Naive thymus-derived CD4-positive, alpha-beta T cell (primary cell): ENCODE measurements at regions of chr2 and their contacts with region 1.

Region 1: DNA sequence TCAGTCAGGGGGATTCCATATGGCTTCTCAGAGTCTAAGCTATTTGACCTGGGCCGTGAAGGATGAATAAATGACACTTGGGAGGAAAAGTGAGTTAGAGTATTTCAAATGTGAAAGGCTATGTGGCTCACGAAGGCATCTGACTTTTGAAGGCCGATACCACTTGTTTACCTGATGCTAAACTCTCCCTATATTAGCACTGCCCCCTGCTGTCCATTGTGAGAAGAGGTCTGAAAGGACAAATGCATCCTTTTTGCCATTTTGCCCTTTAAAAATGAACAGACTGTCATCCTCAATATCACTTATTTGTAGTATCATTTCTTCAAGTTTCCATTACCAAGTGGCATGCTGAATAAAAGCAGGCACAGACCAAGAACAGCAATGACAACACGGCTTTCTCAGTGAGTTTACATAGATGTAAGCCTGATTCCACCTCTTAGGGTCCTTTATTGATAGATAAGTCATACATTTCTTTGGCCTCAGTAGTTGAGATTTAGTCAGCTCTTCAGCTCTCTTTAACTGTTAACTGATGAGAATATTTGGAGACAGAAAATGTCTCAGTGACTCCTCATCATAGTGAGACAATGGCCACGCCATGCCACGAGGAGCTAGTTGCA is 40.1 kb downstream of the DOCK10 start:
- DNase-seq: peak in 8 of 9 donors; percentile 48 to 75 (median 70)
- ATAC-seq: peak; percentile 93
- H3K4me3 ChIP-seq: no peak overlapping the region
- H3K4me3 Mint-ChIP-seq: peak overlapping the region in 9 of 10 donors; percentile 9 to 70 (median 40)
- H3K27ac ChIP-seq: peak overlapping the region; percentile 23
- H3K27ac Mint-ChIP-seq: peak overlapping the region; percentile 64 to 90 (median 87)
- H3K4me1 ChIP-seq: peaks cover 27 to 43% of the 10 kb centered on the region in 2 donors
- H3K4me1 Mint-ChIP-seq: peaks cover 51 to 97% (median 90%) of the 10 kb centered on the region in 7 donors
- H3K27me3 ChIP-seq: no peaks in the 10 kb centered on the region
- H3K27me3 Mint-ChIP-seq: no peaks in the 10 kb centered on the region

Region 2: DNA sequence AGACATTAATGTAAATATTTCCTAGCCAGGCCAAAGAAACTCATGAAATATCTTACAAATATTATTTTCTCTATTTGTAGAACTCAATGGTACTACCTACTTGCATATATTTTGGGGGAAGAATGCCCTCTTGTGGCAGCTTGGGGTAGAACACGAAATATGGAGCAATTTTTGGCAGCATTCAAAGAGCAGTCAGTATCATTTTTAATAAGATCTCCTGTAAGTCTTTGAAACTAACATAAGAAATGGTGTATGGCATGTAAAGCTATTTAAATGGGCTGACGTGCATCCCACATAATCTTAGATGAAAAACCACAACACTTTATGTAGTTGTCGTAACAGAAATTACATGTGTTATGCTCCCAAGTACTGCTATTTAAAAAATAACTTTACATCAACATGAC is 223.7 kb before region 1 on chr2:
- CTCF ChIA-PET with region 1: no interaction called
- POLR2A ChIA-PET with region 1: no interaction called
- intact Hi-C with region 1: loop called in 1 of 2 experiments (anchors 2 kb)
- DNase-seq: peak; percentile 18 to 68 (median 58)
- ATAC-seq: peak; percentile 80
- H3K4me3 ChIP-seq: no peak overlapping the region
- H3K4me3 Mint-ChIP-seq: no peak overlapping the region
- H3K27ac ChIP-seq: no peak overlapping the region
- H3K27ac Mint-ChIP-seq: peak overlapping the region in 5 of 9 donors; percentile 10 to 54 (median 43)
- H3K4me1 ChIP-seq: no peaks in the 10 kb centered on the region
- H3K4me1 Mint-ChIP-seq: peaks cover 0 to 22% (median 11%) of the 10 kb centered on the region in 7 donors
- H3K27me3 ChIP-seq: no peaks in the 10 kb centered on the region
- H3K27me3 Mint-ChIP-seq: no peaks in the 10 kb centered on the region

Region 3: GRCh38 chr2:224927646-224928173 is 74.4 kb before region 1 on chr2:
- CTCF ChIA-PET with region 1: interaction called, 27 read pairs
- POLR2A ChIA-PET with region 1: interaction called, 12 read pairs
- intact Hi-C with region 1: loop called (anchors 1 kb)
- DNase-seq: peak; percentile 18 to 91 (median 85)
- ATAC-seq: peak; percentile 89
- H3K4me3 ChIP-seq: no peak overlapping the region
- H3K4me3 Mint-ChIP-seq: peak overlapping the region; percentile 48 to 85 (median 74)
- H3K27ac ChIP-seq: peak overlapping the region; percentile 86
- H3K27ac Mint-ChIP-seq: peak overlapping the region; percentile 87 to 99 (median 96)
- H3K4me1 ChIP-seq: peaks cover 81 to 95% of the 10 kb centered on the region in 2 donors
- H3K4me1 Mint-ChIP-seq: peaks cover 85 to 99% (median 98%) of the 10 kb centered on the region in 7 donors
- H3K27me3 ChIP-seq: no peaks in the 10 kb centered on the region
- H3K27me3 Mint-ChIP-seq: no peaks in the 10 kb centered on the region

Region 4: DNA sequence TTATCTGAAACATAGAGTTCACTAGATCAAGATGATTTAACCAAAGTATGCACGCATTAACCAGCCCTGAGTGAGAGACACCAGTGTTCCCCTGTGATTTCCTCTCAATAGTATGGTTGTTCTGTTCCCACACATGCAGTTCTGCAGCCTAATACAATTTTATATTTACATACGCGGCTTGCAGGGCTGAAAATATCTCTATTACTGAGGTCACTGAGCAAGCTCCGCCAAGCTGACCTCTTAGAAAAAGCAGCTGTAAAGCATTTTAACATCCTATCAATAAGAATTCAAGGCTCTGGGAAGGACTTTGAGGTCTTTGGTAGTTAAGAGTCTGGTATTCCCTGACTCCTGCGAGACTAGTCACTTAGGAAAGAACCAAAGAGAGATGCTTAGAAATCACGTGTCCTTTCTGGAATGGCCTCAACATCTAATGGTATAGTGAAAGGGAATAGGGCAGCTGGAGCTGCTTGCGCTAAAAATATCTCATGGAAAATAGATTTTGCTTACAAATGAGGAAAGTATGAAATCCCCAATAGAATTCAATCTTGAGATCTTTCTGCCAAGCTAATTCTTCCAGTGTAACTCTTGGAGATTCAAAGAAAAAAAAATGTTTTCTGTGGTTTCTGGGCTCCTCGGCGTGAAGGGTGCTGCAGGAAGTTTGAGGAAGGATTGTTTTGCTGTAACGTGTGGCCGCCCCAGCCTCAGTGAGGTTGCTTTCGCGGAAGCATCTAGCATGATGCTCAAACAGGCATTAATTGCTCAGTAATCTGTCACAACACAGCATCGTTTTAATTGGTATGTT is 19.0 kb before region 1 on chr2:
- CTCF ChIA-PET with region 1: interaction called, 58 read pairs
- POLR2A ChIA-PET with region 1: interaction called, 3 read pairs
- intact Hi-C with region 1: loop called (anchors 1 to 2 kb)
- DNase-seq: peak in 7 of 9 donors; percentile 44 to 66 (median 52)
- ATAC-seq: peak; percentile 74
- H3K4me3 ChIP-seq: no peak overlapping the region
- H3K4me3 Mint-ChIP-seq: peak overlapping the region; percentile 63 to 85 (median 77)
- H3K27ac ChIP-seq: peak overlapping the region; percentile 50
- H3K27ac Mint-ChIP-seq: peak overlapping the region; percentile 85 to 97 (median 92)
- H3K4me1 ChIP-seq: peaks cover 42 to 58% of the 10 kb centered on the region in 2 donors
- H3K4me1 Mint-ChIP-seq: peaks cover 55 to 91% (median 89%) of the 10 kb centered on the region in 7 donors
- H3K27me3 ChIP-seq: no peaks in the 10 kb centered on the region
- H3K27me3 Mint-ChIP-seq: no peaks in the 10 kb centered on the region

Region 5: DNA sequence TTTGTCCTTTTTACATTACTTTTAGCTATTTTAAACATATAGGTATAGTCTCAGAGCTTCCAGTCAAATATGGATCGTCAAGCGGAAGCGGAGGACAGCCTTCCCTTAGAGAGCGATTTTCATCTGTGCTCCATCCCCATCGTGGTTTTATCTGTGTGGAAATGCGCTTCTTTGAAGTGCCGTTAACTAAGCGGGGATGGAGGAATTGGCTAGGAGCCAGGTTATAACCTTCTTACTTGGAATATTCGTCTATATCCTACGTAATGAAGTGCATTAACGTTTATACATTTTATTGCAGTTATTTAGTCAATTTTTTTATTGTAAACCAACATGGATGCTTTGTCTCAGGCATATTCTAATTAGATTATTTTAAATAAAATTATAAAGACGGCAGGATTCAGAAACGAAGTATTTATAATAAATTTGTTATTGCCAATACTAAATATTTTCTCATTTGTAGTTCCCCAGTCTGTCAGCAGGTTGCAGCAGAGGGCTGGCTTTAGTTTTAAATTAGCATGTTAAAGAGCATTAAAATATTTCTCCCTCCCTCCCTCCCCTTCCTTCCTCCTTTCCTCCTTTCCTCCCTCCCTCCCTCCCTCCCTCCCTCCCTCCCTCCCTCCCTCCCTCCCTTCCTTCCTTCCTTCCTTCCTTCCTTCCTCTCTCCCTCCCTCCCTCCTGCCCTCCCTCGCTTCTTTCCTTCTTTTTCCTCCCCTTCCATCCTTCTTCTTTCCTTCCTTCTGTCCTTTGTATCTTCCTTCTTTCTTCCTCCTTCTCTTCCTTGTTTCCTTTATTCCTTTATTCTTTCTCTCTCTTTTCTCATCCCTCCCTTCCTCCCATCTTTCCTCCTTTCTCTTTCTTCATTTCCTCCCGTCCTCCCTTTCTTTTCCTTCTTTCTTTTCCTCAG is 120.7 kb after region 1 on chr2:
- CTCF ChIA-PET with region 1: interaction called, 7 read pairs
- POLR2A ChIA-PET with region 1: no interaction called
- intact Hi-C with region 1: loop called in 1 of 2 experiments (anchors 2 kb)
- DNase-seq: peak in 4 of 9 donors; percentile 15 to 28 (median 22)
- ATAC-seq: no peak
- H3K4me3 ChIP-seq: no peak overlapping the region
- H3K4me3 Mint-ChIP-seq: peak overlapping the region in 1 of 10 donors; percentile 48
- H3K27ac ChIP-seq: no peak overlapping the region
- H3K27ac Mint-ChIP-seq: peak overlapping the region in 4 of 9 donors; percentile 12 to 83 (median 44)
- H3K4me1 ChIP-seq: no peaks in the 10 kb centered on the region
- H3K4me1 Mint-ChIP-seq: peaks cover 0 to 13% (median 5%) of the 10 kb centered on the region in 7 donors
- H3K27me3 ChIP-seq: no peaks in the 10 kb centered on the region
- H3K27me3 Mint-ChIP-seq: peaks cover 0 to 14% (median 7%) of the 10 kb centered on the region in 5 donors

Region 6: GRCh38 chr2:225590932-225591331 is 588.8 kb after region 1 on chr2:
- CTCF ChIA-PET with region 1: no interaction called
- POLR2A ChIA-PET with region 1: no interaction called
- intact Hi-C with region 1: no loop called
- DNase-seq: no peak
- ATAC-seq: no peak
- H3K4me3 ChIP-seq: no peak overlapping the region
- H3K4me3 Mint-ChIP-seq: no peak overlapping the region
- H3K27ac ChIP-seq: no peak overlapping the region
- H3K27ac Mint-ChIP-seq: no peak overlapping the region
- H3K4me1 ChIP-seq: no peaks in the 10 kb centered on the region
- H3K4me1 Mint-ChIP-seq: no peaks in the 10 kb centered on the region
- H3K27me3 ChIP-seq: no peaks in the 10 kb centered on the region
- H3K27me3 Mint-ChIP-seq: peaks cover 0 to 10% (median 4%) of the 10 kb centered on the region in 5 donors

Region 7: DNA sequence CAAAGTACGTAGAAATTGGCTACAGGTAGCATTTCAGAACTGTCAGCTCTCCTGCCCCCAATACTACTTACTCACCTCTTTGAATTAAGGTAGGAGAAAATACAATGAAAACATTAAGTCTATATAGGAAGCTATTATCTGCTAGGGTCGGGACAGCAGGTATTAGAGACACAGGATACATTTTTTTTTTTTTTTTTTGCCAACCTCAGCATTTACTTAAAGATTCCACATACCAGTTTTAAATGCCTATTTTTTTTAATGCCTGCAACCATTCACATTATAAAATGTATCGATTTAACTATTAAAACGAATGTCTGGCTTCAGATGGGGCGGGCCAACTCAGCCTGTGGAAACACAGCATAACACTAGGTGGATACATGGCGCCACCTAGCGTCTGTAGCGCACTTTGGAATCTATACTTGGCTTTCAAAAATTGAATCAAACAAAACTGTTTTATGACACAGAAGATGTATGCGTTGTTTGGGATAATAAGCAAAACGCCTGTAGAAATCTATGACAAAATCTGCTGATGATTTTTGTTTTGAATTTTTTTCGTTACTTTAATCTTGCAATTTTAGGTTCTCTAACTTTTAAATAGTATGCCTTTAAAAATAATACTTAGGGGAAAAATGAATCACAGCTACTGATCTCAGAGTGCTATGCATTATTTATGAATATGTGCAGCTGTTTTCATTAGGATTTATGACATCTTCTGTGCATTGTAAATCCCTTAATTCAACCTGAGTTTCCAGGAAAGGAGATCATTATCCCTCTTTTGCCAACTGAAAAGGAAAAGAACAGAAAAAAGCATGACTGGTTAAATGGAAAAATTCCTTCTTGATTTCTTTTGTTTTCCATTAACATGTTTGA is 658.4 kb after region 1 on chr2:
- CTCF ChIA-PET with region 1: interaction called, 6 read pairs
- POLR2A ChIA-PET with region 1: no interaction called
- intact Hi-C with region 1: loop called (anchors 1 to 10 kb)
- DNase-seq: peak; percentile 37 to 71 (median 60)
- ATAC-seq: peak; percentile 83
- H3K4me3 ChIP-seq: no peak overlapping the region
- H3K4me3 Mint-ChIP-seq: no peak overlapping the region
- H3K27ac ChIP-seq: no peak overlapping the region
- H3K27ac Mint-ChIP-seq: no peak overlapping the region
- H3K4me1 ChIP-seq: no peaks in the 10 kb centered on the region
- H3K4me1 Mint-ChIP-seq: no peaks in the 10 kb centered on the region
- H3K27me3 ChIP-seq: peaks cover 0 to 2% of the 10 kb centered on the region in 2 donors
- H3K27me3 Mint-ChIP-seq: peaks cover 15 to 23% (median 20%) of the 10 kb centered on the region in 5 donors

Region 8: GRCh38 chr2:225740086-225740485 is 737.9 kb after region 1 on chr2:
- CTCF ChIA-PET with region 1: no interaction called
- POLR2A ChIA-PET with region 1: no interaction called
- intact Hi-C with region 1: no loop called
- DNase-seq: no peak
- ATAC-seq: no peak
- H3K4me3 ChIP-seq: no peak overlapping the region
- H3K4me3 Mint-ChIP-seq: no peak overlapping the region
- H3K27ac ChIP-seq: no peak overlapping the region
- H3K27ac Mint-ChIP-seq: no peak overlapping the region
- H3K4me1 ChIP-seq: no peaks in the 10 kb centered on the region
- H3K4me1 Mint-ChIP-seq: no peaks in the 10 kb centered on the region
- H3K27me3 ChIP-seq: no peaks in the 10 kb centered on the region
- H3K27me3 Mint-ChIP-seq: peaks cover 0 to 16% (median 5%) of the 10 kb centered on the region in 5 donors